Naive thymus-derived CD8-positive, alpha-beta T cell (primary cell): ENCODE measurements at regions of chr2 and their contacts with region 1.

Region 1: DNA sequence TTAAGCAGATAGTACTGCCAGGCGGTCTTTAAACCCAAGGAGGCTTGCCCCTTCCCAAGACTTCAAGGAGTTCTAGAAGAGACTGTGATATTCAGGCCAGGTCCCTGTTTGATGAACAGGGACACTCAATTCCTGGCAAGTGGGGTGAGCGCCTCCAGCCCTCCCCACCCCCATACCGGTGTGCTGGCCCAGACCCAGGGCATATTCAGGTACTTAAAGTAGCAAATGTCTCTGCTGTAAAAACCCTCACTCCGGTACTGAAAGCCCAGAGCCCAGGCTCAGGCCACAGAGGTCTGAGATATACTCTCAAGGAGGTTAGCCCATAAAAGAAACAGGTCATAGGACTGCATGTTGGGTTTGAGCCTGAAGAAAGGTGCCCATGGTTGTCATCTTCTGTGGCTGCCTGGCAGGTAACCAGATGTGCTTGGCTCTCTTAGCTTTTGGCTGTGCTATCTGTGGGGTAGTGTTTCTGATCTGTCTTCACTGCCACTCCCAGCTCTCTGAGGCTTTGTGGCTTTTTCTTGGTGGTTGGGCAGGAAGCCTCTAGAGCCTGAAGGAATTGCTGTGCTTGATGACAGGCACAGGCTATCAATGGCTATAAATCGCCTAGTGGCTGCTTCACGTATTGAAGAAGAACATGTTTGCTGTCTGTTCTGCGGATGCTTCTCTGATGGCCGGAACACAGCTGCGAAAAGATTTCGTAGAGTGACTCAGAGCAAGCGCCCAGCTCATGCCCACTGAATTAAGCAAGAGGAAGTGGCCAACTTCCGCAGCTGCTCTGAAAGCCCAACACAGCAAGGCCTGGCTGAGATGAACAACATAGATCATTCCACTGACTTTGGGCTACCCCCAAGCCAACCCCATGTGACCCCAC is 63.3 kb upstream of the ALPP start:
- DNase-seq: peak; percentile 34 to 87 (median 72)
- ATAC-seq: peak; percentile 76 to 84
- H3K4me3 Mint-ChIP-seq: peak overlapping the region; percentile 56 to 85 (median 81)
- H3K27ac Mint-ChIP-seq: peak overlapping the region; percentile 92 to 99 (median 96)
- H3K4me1 Mint-ChIP-seq: peaks cover 52 to 99% (median 94%) of the 10 kb centered on the region in 4 donors
- H3K27me3 Mint-ChIP-seq: no peaks in the 10 kb centered on the region

Region 2: DNA sequence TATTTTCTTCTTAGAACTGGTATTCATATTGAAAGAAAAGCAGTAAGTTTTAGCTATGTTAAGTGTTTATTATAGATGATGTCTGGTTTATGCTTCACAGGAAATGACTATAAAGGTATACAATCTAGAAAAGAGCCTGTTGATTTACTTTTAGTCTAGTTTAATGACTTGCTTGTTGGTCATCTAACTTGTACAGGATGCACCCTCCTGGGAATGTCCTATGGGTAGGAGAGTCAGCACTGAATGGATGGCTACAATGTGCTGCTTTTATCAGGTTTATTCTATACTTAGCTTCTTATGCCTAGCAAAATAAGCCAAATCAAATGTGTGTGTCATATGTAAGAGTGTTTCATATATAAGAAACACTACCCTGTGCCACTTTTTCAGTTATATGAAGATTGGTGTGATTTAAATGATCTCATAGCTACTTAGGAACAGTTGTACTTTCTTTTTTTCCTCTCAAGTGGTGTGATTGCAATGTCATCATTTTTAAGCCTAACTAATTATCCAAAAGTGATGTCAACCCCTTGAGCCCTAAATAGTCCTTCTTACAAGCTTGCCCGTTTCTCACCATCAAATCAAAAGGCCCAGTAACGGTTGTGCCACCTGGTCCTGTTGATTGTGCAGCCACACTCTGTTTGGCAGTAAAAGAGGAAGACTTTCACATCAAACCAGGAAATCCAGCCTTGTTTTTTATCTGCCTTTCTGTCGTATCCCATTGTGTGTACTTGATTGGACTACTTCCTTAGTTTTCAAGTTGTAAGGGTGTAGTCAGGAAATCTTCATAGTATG is 177.7 kb before region 1 on chr2:
- POLR2A ChIA-PET with region 1: interaction called, 13 read pairs
- DNase-seq: no peak
- ATAC-seq: no peak
- H3K4me3 Mint-ChIP-seq: peak overlapping the region in 7 of 10 donors; percentile 7 to 70 (median 41)
- H3K27ac Mint-ChIP-seq: peak overlapping the region; percentile 74 to 93 (median 84)
- H3K4me1 Mint-ChIP-seq: peaks cover 45 to 78% (median 68%) of the 10 kb centered on the region in 4 donors
- H3K27me3 Mint-ChIP-seq: no peaks in the 10 kb centered on the region

Region 3: DNA sequence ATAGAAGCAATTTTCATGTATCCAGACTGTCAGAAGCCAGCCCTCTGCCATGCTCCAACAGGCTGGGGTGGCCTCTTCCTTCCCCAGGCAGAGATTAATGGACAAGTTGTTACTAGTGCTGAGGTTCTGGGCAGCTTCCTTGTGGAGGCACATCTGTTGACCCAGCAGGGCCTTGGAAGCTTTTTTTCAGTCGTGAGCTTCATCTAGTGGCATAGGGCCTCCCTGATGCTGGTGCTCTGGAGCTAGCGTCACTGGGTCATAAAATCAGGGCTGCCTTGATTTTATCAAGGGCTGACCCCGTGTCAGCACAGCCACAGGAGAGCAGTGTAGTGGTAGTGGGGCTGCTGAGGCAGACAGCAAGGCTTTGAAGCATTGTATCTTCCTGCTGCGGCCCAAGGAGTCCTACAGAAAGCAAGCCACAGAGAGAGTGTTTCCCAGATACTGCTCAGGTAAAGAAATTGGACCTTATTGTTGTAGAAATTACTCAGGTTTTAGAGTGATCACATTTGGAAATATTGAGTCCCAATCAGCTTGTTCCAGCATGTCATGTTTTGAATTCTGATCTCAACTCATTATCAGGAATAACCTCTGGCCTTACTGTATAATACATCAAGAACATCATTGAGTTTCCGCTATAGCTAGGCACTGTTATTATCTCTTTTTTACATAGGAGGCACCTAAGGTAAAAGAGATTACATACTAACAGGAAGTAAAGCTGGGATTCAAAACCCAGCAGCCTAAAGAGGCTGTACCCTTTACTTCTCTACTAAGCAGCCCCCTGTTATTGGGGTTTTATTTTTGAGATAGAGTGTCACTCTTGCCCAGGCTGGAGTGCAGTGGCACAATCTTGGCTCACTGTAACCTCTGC is 29.1 kb before region 1 on chr2:
- POLR2A ChIA-PET with region 1: interaction called, 46 read pairs
- DNase-seq: peak in 4 of 10 donors; percentile 3 to 28 (median 23)
- ATAC-seq: peak; percentile 72 to 76
- H3K4me3 Mint-ChIP-seq: peak overlapping the region in 9 of 10 donors; percentile 22 to 72 (median 48)
- H3K27ac Mint-ChIP-seq: peak overlapping the region; percentile 89 to 96 (median 94)
- H3K4me1 Mint-ChIP-seq: peaks cover 44 to 72% (median 59%) of the 10 kb centered on the region in 4 donors
- H3K27me3 Mint-ChIP-seq: no peaks in the 10 kb centered on the region

Region 4: GRCh38 chr2:232292395-232293154 is 22.7 kb before region 1 on chr2:
- POLR2A ChIA-PET with region 1: interaction called, 46 read pairs
- DNase-seq: peak in 2 of 10 donors; percentile 30 to 72
- ATAC-seq: peak; percentile 40 to 50
- H3K4me3 Mint-ChIP-seq: peak overlapping the region in 3 of 10 donors; percentile 26 to 62 (median 43)
- H3K27ac Mint-ChIP-seq: peak overlapping the region; percentile 8 to 93 (median 57)
- H3K4me1 Mint-ChIP-seq: peaks cover 20 to 36% (median 28%) of the 10 kb centered on the region in 4 donors
- H3K27me3 Mint-ChIP-seq: no peaks in the 10 kb centered on the region

Region 5: DNA sequence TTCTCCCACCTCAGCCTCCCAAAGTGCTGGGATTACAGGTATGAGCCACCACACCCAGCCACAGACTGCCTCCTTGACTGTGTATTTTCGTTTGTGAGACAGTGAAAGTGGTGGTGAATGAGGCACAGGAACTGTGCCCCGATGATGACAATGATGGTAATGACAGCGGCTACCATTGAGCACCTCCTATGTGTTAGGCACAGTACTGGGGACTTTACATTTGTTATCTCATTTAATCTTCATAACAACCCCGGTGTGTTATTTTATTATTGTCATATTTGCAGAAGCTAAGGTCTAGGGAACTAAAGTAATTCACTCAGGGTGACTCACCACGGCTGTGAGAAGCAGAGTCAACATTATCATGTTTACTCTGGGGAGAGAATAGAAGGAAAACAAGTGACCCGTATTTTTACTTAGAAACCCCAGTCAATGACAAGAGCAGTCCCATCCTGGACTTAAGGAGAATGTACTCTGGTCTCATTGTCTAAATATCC is 14.3 kb before region 1 on chr2:
- POLR2A ChIA-PET with region 1: interaction called, 80 read pairs
- DNase-seq: no peak
- ATAC-seq: peak in 1 of 2 donors; percentile 51
- H3K4me3 Mint-ChIP-seq: peak overlapping the region in 4 of 10 donors; percentile 5 to 87 (median 14)
- H3K27ac Mint-ChIP-seq: peak overlapping the region in 7 of 10 donors; percentile 38 to 88 (median 67)
- H3K4me1 Mint-ChIP-seq: peaks cover 17 to 45% (median 38%) of the 10 kb centered on the region in 4 donors
- H3K27me3 Mint-ChIP-seq: no peaks in the 10 kb centered on the region

Region 6: DNA sequence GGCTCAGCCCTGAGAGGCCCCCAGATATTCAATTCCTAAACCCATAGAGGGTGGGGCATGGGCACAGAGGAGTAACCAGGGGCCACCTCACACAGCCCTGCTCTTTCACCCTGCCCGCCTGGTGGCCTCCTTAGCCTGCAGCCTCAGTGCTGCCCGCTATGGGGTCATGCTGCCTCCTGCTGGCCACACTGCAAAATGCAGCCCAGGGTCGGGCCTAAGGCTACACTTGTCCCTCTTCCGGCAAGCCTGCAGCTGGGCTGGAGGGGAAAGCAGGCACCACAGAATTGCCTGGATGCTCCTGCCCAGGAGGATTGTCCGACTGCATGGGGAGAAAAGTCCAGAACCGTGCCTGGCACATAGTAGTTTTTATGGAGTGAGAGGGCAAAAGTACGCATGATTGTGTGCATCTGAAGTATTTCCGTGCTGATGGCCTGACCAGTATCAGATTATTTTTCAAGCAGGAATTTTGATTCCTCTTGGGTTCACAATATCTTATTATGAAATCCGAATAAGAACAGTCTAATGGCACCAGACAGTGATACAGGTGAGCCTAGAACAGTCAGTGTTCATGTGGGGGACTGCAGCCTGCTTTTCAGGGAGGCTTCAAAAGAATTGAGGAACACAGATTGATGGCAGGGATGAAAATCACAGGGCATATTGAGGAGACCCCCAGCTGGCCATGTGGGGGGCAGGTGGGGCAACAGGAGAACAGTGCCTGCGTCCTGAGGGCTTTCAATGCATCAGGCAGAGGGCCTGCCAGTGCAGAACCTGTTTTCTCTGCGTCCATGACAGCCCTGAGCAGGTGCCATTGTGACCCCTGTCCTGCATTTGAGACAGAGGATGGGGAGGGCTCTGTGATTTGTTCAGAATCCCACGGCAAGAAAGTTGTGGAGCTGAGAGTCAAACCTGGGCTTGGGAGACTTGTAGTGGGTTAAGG is 12.1 kb after region 1 on chr2:
- POLR2A ChIA-PET with region 1: interaction called, 80 read pairs
- DNase-seq: peak; percentile 70 to 91 (median 84)
- ATAC-seq: peak; percentile 82 to 84
- H3K4me3 Mint-ChIP-seq: no peak overlapping the region
- H3K27ac Mint-ChIP-seq: peak overlapping the region in 5 of 10 donors; percentile 22 to 52 (median 39)
- H3K4me1 Mint-ChIP-seq: peaks cover 10 to 42% (median 31%) of the 10 kb centered on the region in 4 donors
- H3K27me3 Mint-ChIP-seq: no peaks in the 10 kb centered on the region